ENCODE measurements at regions of chr4 and their contacts with region 1.

Region 1: DNA sequence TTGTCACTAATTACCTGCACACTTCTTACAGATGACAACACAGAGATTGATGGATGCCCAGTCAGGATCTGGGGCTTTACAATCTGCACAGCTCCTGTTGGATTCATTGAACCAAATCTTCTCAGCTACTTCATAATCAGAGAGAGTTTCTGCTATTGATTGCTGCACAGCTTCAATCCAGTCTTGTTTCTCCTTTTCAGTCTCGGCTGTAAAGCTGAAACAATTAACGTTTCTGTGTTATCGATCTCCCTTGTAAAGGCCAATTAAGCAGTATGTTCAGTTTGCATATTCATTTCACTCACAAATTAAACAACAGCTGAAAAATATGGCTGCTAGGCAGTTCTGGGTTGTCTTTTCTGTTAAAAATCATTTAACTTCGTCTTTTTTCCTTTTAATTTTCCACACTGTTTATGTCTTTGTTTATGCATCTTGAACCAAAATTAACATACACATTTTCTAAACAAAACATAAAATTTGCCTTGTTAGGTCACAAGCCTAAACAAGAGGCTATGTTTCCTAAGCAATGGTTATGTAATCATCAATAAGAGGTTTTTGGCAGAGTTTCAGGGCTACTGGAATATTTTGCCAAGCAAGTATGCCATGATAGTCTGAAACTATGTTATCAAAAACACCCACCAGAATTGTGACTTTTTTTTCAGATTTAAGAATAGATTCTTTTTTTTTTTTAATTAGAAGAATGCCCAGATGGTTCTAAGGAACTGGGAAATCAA is 79.2 kb downstream of the ARAP2 start:
- DNase-seq: no peak
- ATAC-seq: no peak
- H3K4me3 Mint-ChIP-seq: no peak overlapping the region
- H3K27ac Mint-ChIP-seq: no peak overlapping the region
- H3K4me1 Mint-ChIP-seq: peaks cover 23% of the 10 kb centered on the region
- H3K27me3 Mint-ChIP-seq: no peaks in the 10 kb centered on the region
- CTCF ChIP-seq: no peak

Region 2: GRCh38 chr4:36111172-36111571 is 53.9 kb before region 1 on chr4:
- CTCF ChIA-PET with region 1: no interaction called
- POLR2A ChIA-PET with region 1: no interaction called
- intact Hi-C with region 1: loop called (anchors 10 kb)
- DNase-seq: no peak
- ATAC-seq: no peak
- H3K4me3 Mint-ChIP-seq: no peak overlapping the region
- H3K27ac Mint-ChIP-seq: peak overlapping the region; percentile 13
- H3K4me1 Mint-ChIP-seq: no peaks in the 10 kb centered on the region
- H3K27me3 Mint-ChIP-seq: no peaks in the 10 kb centered on the region
- CTCF ChIP-seq: no peak

Measured in activated CD8-positive, alpha-beta T cell treated with anti-CD3 and anti-CD28 coated beads for 36 hours (primary cell).